Endothelial cell of umbilical vein (primary cell): ENCODE measurements at regions of chr5 and their contacts with region 1.

Region 1: DNA sequence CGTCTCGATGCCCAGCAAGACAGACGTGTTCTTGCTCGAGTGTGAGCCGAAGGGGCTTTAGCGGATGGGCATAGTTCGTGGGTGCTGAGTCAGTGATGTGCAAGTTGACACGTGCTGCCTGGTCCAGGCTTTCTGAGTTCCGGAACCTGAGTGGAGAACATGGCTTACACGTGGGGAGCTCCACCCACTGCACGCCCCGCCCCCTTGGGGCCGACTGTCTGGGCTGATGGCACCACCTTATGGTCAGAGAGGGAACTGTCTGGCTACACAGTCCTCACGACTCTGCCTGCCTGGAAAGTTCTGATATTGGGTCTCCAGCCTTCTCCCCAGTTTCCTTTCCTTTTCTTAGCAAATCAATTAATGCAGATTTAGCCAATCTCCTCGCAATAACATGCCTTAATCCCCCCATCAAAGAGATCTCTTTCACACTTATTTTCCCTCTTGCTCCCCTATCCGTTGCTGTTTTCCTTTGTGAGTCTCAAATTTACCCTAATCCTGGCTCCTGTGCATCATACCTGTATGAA is 3.8 kb upstream of the STC2 start:
- DNase-seq: peak; percentile 86
- H3K4me3 ChIP-seq: no peak overlapping the region
- H3K27ac ChIP-seq: no peak overlapping the region
- H3K4me1 ChIP-seq: peaks cover 29% of the 10 kb centered on the region
- H3K27me3 ChIP-seq: no peaks in the 10 kb centered on the region
- CTCF ChIP-seq: peak; percentile 94 to 97
- POLR2A ChIP-seq: no peak

Region 2: DNA sequence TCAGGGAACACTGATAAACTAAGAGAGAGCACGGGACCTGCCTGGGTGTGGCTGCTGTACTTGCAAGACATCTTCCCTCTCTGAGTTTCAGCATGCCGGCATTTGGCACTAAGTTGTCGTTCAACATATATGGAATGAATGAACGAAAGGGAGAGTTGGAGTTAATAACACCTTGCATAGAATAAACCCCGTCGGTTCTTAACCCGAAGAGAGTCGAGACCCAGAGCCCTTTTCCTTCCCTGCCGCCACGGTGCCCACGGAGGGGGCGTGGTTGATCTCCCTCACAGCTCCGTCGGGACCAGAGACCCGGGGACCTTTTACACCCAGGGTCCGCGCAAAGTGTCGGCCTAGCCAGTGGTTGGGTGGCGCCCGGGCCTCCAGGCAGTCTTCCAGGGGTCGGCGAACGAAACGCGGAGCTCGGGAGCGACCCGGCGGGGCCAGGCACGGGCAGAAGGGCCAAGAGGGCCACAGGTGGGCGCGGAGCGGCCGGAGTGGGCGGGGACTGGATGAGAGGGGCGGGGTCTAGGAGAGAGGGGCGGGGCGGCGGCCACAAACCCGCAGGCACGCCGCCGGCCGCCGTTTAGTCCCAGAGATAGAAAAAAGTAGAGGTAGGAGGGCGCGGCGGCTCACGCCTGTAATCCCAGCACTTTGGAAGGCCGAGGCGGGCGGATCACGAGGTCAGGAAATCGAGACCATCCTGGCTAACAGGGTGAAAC is 373.5 kb before region 1 on chr5:
- CTCF ChIA-PET with region 1: interaction called, 4 read pairs
- POLR2A ChIA-PET with region 1: no interaction called
- dilution Hi-C with region 1: no loop called
- intact Hi-C with region 1: loop called (anchors 5 kb)
- DNase-seq: peak; percentile 58
- H3K4me3 ChIP-seq: peak overlapping the region; percentile 59 to 66 (median 63)
- H3K27ac ChIP-seq: peak overlapping the region; percentile 59
- H3K4me1 ChIP-seq: peaks cover 22% of the 10 kb centered on the region
- H3K27me3 ChIP-seq: no peaks in the 10 kb centered on the region
- CTCF ChIP-seq: no peak
- POLR2A ChIP-seq: no peak

Region 3: GRCh38 chr5:173144200-173145176 is 187.5 kb before region 1 on chr5 and contains the start of gene BNIP1:
- CTCF ChIA-PET with region 1: interaction called, 3 read pairs
- POLR2A ChIA-PET with region 1: no interaction called
- dilution Hi-C with region 1: no loop called
- intact Hi-C with region 1: loop called (anchors 2 kb)
- DNase-seq: peak; percentile 95
- H3K4me3 ChIP-seq: peak within 1 kb of the TSS; percentile 77 to 97 (median 89)
- H3K27ac ChIP-seq: peak within 1 kb of the TSS; percentile 89
- H3K4me1 ChIP-seq: peaks cover 4% of the 10 kb centered on the region
- H3K27me3 ChIP-seq: no peaks in the 10 kb centered on the region
- CTCF ChIP-seq: peak; percentile 98
- POLR2A ChIP-seq: peak; percentile 73
- total RNA-seq, gene BNIP1: 15.7 and 19.7 TPM in 2 replicates

Region 4: DNA sequence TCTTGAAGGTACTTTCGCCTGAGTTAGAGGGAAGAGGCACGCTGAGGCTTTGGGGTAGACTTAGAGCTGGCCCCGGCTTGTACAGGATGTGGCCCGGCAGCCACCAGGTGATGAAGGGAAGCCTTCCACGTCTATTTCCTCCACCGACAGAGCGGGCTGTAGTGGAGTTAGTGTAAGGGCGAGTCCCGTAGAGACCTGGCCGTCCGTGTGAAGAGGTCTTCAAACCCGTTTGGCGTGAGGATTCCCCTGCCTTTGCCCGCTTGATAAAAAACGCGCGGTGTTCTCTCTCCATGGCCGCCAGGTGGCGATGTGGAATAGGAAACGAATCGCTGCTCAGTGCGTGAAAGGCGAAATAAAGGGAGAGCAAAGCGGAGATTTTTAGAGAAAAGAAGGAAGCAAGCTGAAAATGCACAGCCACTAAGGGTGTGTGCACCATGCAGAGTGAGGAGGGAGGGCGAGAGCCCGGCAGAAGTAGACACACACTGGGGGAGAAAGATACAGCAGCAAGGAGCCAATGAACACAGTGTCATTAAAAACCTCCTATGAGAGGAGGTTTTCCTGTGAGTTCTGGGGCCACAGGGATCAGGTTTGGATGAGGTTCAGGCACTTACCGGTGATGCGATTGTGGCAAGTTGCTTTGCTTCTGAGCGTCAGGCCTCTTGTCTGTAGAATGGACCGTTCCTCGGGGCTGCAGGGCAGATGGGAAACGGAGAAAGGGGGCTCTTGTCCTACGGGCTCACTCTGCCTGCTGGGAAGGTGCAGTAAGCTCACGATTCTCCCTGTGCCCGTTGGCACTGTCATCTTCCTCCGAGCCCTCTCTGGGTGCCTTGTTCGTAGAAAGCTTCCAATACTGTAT is 38.0 kb before region 1 on chr5:
- CTCF ChIA-PET with region 1: interaction called, 428 read pairs
- POLR2A ChIA-PET with region 1: interaction called, 5 read pairs
- dilution Hi-C with region 1: no loop called
- intact Hi-C with region 1: loop called (anchors 1 kb)
- DNase-seq: peak; percentile 75
- H3K4me3 ChIP-seq: no peak overlapping the region
- H3K27ac ChIP-seq: no peak overlapping the region
- H3K4me1 ChIP-seq: peaks cover 22% of the 10 kb centered on the region
- H3K27me3 ChIP-seq: no peaks in the 10 kb centered on the region
- CTCF ChIP-seq: peak; percentile 77 to 85
- POLR2A ChIP-seq: no peak

Region 5: DNA sequence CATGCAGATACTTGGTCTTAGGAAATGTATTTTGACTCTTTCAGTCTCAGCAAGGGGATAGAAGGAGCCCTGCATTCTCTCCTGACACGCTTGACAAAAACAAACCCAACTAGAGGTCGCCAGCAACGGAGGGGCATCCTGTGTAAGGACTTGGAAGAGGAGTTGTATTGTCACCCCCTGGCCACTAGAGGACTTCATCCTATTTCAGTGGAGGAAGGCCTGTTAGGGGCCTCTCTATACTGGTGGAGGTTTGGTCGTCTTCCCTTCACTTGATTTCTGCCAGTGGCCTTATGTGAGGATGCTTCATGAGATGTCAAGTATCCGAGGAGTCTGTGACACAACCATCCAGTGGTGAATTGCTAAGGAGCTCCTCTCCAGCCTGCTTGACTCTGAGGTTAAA is 119.0 kb after region 1 on chr5:
- CTCF ChIA-PET with region 1: no interaction called
- POLR2A ChIA-PET with region 1: no interaction called
- dilution Hi-C with region 1: no loop called
- intact Hi-C with region 1: loop called (anchors 2 kb)
- DNase-seq: no peak
- H3K4me3 ChIP-seq: no peak overlapping the region
- H3K27ac ChIP-seq: no peak overlapping the region
- H3K4me1 ChIP-seq: peaks cover 18% of the 10 kb centered on the region
- H3K27me3 ChIP-seq: no peaks in the 10 kb centered on the region
- CTCF ChIP-seq: peak; percentile 4 to 9
- POLR2A ChIP-seq: no peak

Region 6: DNA sequence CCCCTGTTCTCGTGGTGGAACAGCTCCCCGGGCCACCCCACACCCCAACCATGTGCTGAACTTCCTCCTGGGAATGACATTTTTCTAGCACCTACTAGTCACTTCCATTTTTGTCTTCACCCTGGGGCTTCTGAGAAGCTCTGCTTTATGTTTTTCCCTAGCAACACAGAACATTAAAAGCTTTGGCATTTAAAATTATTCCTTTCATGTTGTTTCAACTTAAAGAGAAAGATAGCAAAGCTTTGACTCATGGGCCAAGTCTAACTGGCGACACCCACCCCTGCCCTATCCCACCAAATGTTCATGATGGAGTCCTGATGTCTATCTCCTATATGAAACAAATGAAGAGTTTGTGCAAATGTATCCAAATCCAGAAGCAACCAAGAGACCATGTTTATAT is 262.0 kb after region 1 on chr5:
- CTCF ChIA-PET with region 1: no interaction called
- POLR2A ChIA-PET with region 1: no interaction called
- dilution Hi-C with region 1: no loop called
- intact Hi-C with region 1: no loop called
- DNase-seq: no peak
- H3K4me3 ChIP-seq: no peak overlapping the region
- H3K27ac ChIP-seq: no peak overlapping the region
- H3K4me1 ChIP-seq: no peaks in the 10 kb centered on the region
- H3K27me3 ChIP-seq: no peaks in the 10 kb centered on the region
- CTCF ChIP-seq: no peak
- POLR2A ChIP-seq: no peak

Region 7: DNA sequence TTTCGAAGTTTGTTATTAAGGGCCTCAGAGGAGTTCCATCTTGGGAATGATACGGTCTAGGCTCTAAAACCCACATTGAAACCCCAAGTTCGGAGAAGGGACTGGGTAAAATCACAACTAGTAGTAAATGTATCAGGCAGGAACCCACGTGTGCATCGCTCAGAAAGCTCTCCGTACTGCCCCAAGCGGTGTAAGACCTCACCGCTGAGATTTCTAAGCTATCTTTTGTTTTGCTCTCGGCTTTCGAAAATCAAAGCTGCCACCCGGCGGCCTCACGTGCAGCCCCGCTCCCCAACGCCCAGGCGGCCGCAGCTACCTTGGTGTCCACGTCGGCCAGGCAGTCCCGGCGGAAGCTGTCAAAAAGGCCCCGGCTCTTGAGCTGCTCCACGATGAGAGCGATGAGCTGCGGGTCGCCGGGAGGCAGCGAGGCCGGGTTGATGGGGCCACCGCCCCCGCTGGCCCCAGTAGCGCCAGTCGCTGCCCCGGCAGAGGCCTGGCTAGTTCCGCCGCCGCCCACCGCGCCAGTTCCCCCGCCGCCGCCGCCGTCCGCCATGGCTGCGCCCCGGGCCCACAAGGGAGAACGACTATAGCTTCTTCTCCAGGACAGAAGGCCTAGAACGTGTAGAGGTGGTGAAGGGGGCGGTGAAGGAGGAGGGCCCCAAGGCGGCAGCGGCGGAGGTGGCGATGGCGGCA is 284.0 kb after region 1 on chr5:
- CTCF ChIA-PET with region 1: interaction called, 3 read pairs
- POLR2A ChIA-PET with region 1: no interaction called
- dilution Hi-C with region 1: no loop called
- intact Hi-C with region 1: loop called (anchors 1 kb)
- DNase-seq: peak; percentile 81
- H3K4me3 ChIP-seq: peak overlapping the region; percentile 69 to 86 (median 82)
- H3K27ac ChIP-seq: peak overlapping the region; percentile 85
- H3K4me1 ChIP-seq: peaks cover 28% of the 10 kb centered on the region
- H3K27me3 ChIP-seq: no peaks in the 10 kb centered on the region
- CTCF ChIP-seq: peak; percentile 67 to 75
- POLR2A ChIP-seq: peak; percentile 15